Heart right ventricle (tissue), 16 donors: ENCODE measurements at regions of chr10 and their contacts with region 1.

Region 1: DNA sequence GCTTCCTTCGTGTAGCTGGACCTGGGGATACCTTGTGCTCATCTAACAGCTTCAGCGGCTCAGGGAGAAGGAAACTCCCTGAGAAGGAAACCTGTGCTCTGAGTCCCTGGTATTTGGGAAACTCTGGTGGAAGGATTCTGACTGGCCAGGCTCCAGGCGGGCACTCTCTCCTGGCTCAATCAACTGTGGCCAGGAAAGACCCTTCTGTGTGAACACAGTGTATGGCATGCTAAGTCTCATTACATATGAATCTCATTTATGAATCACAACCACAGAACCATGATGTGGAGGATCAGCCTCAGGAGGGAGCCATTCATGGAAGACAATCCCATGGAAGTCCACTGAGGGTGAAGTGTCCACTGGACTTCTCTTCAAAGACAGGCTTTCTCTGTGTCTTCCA is 20.9 kb downstream of the NPS start:
- DNase-seq: no peak
- ATAC-seq: no peak
- H3K4me3 ChIP-seq: no peak overlapping the region
- H3K27ac ChIP-seq: no peak overlapping the region
- H3K4me1 ChIP-seq: no peaks in the 10 kb centered on the region
- H3K27me3 ChIP-seq: no peaks in the 10 kb centered on the region
- CTCF ChIP-seq: no peak

Region 2: DNA sequence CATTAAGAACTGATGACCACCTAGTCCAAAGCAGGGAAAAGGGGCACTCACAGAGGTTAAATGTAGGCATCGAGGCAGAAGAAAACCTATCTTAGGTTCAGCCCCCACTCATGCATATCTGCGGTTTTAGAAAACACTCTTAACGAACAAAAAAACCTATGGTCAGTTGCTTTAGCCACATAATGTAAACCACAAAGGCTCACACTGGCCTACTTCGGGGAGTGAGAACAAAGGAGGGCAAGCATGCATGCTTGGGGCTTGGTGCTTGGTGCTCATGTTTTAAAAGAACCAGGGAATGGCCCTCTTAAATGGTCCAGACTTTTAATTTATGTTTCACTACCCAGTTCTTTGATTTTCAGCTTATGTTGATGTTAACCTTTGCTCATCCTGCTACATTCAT is 387.9 kb before region 1 on chr10:
- intact Hi-C with region 1: loop called in 1 of 10 experiments (anchors 5 kb)
- DNase-seq: no peak
- ATAC-seq: no peak
- H3K4me3 ChIP-seq: no peak overlapping the region
- H3K27ac ChIP-seq: no peak overlapping the region
- H3K4me1 ChIP-seq: peaks cover 0 to 7% (median 0%) of the 10 kb centered on the region in 9 donors
- H3K27me3 ChIP-seq: no peaks in the 10 kb centered on the region
- CTCF ChIP-seq: no peak